ENCODE measurements at regions of chr2 and their contacts with region 1.

Region 1: GRCh38 chr2:174138161-174138560 is 110.2 kb downstream of the OLA1 start:
- DNase-seq: no peak
- H3K4me3 ChIP-seq: no peak overlapping the region
- H3K27ac ChIP-seq: no peak overlapping the region
- H3K4me1 ChIP-seq: no peaks in the 10 kb centered on the region
- H3K27me3 ChIP-seq: no peaks in the 10 kb centered on the region
- CTCF ChIP-seq: peak in 2 of 3 experiments; percentile 35 to 59; a peak in 3 of 4 replicates
- EP300 ChIP-seq: no peak
- POLR2A ChIP-seq: no peak
- RAD21 ChIP-seq: peak; percentile 48 to 64; a peak in 3 of 4 replicates

Region 2: DNA sequence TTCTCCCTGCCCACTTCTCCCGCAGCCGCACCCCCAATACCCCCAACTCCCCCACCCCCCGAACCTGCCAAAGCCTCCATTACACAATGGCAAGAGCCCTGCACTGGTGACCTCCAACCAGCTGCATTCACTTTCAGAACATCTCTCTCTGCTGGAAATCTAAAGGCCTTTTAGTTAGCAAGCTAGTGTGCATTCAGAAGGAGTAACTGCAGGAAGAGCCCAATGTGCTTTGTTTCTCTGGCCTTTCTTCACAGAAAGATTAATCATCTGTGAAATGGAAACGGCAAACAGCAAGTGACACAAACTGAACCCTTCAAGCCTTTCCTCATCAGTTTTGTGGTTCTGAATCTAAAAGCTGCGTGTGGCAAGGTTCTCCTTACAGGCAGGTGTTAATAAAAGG is 14.0 kb before region 1 on chr2:
- CTCF ChIA-PET with region 1: interaction called, 10 read pairs
- POLR2A ChIA-PET with region 1: no interaction called
- DNase-seq: no peak
- H3K4me3 ChIP-seq: peak overlapping the region in 1 of 4 experiments; percentile 47; a peak in 2 of 8 replicates
- H3K27ac ChIP-seq: peak overlapping the region; percentile 41; the same call in 1 of the 2 replicates
- H3K4me1 ChIP-seq: peaks cover 2 to 23% (median 12%) of the 10 kb centered on the region in 4 experiments; a peak in 4 of 7 replicates
- H3K27me3 ChIP-seq: no peaks in the 10 kb centered on the region
- CTCF ChIP-seq: no peak
- EP300 ChIP-seq: no peak
- POLR2A ChIP-seq: peak in 1 of 2 experiments; percentile 27; a peak in 1 of 3 replicates
- RAD21 ChIP-seq: no peak

Region 3: GRCh38 chr2:174153757-174154680 is 15.9 kb after region 1 on chr2:
- CTCF ChIA-PET with region 1: interaction called, 11 read pairs
- POLR2A ChIA-PET with region 1: no interaction called
- DNase-seq: no peak
- H3K4me3 ChIP-seq: no peak overlapping the region
- H3K27ac ChIP-seq: no peak overlapping the region
- H3K4me1 ChIP-seq: no peaks in the 10 kb centered on the region
- H3K27me3 ChIP-seq: no peaks in the 10 kb centered on the region
- CTCF ChIP-seq: no peak
- EP300 ChIP-seq: no peak
- POLR2A ChIP-seq: no peak
- RAD21 ChIP-seq: no peak

Region 4: GRCh38 chr2:174341286-174341994 is 203.3 kb after region 1 on chr2:
- CTCF ChIA-PET with region 1: interaction called, 14 read pairs
- POLR2A ChIA-PET with region 1: no interaction called
- DNase-seq: peak in 1 of 2 experiments; percentile 97
- H3K4me3 ChIP-seq: peak overlapping the region in 3 of 4 experiments; percentile 20 to 63 (median 35); a peak in 6 of 8 replicates
- H3K27ac ChIP-seq: no peak overlapping the region
- H3K4me1 ChIP-seq: peaks cover 6 to 18% (median 12%) of the 10 kb centered on the region in 4 experiments; a peak in 6 of 7 replicates
- H3K27me3 ChIP-seq: peaks cover 40 to 92% (median 73%) of the 10 kb centered on the region in 4 experiments
- CTCF ChIP-seq: peak in 2 of 3 experiments; percentile 89 to 91; a peak in 3 of 4 replicates
- EP300 ChIP-seq: no peak
- POLR2A ChIP-seq: no peak
- RAD21 ChIP-seq: peak; percentile 95

Region 5: GRCh38 chr2:174856447-174856846 is 718.3 kb after region 1 on chr2:
- CTCF ChIA-PET with region 1: no interaction called
- POLR2A ChIA-PET with region 1: no interaction called
- DNase-seq: no peak
- H3K4me3 ChIP-seq: no peak overlapping the region
- H3K27ac ChIP-seq: no peak overlapping the region
- H3K4me1 ChIP-seq: peaks cover 0 to 5% (median 0%) of the 10 kb centered on the region in 4 experiments; a peak in 1 of 7 replicates
- H3K27me3 ChIP-seq: no peaks in the 10 kb centered on the region
- CTCF ChIP-seq: no peak
- EP300 ChIP-seq: no peak
- POLR2A ChIP-seq: no peak
- RAD21 ChIP-seq: no peak

Measured in H1 (cell line).